Stomach (tissue), 19 donors: ENCODE measurements at regions of chr18 and their contacts with region 1.

Region 1: GRCh38 chr18:46264235-46264893 is 160.2 kb downstream of the HAUS1 start:
- DNase-seq: no peak
- H3K4me3 ChIP-seq: no peak overlapping the region
- H3K27ac ChIP-seq: no peak overlapping the region
- H3K4me1 ChIP-seq: peaks cover 0 to 33% (median 16%) of the 10 kb centered on the region in 4 donors
- H3K27me3 ChIP-seq: no peaks in the 10 kb centered on the region
- CTCF ChIP-seq: no peak
- EP300 ChIP-seq: no peak
- POLR2A ChIP-seq: no peak

Region 2: DNA sequence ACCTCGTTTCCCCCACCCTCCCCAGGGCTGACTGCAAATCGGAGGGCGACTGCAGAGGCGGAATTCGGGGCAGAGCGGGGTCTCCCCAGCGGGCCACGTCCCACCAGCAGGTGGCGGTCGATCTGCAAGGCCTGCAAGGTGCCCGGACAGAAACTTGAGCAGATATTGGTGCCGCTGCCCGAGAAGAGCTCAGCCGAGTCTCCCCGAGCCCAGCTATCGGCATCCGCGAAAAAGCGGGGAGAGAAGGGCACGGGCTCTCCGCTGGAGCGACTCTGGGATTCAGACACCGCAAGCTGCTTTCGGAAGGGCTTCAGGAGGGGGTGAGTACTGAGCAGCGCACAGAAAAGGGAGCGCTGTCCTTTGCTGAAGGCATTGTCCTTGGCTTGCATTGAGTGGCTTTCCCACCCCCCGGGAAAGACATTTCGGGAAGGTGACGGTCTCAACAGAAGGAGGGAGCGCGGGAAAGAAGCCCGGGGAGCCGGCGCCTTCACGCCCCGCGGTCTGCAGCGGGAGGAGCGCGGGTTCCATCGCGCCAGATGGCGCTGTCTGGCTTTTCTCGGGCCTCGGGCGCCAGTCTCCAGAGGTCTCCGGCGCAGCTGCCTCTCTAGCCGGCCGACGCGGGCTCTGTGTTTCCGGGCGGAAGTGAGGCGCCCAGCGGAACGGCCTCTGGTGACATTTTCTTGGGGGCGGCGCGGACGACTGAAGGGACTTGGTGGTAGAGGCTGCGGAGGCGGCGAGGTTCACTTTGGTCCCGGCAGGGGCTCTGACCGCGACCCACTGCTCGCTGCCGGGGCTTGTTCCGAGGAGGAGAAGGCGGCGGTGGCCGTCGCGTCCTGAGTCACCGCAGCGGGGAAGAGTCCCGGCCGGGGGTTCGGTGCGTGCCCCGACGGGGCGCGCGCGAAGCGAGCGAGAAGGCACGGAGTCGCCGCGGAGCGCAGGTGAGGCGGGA is 90.7 kb before region 1 on chr18:
- intact Hi-C with region 1: loop called (anchors 10 kb)
- DNase-seq: peak; percentile 93 to 98
- H3K4me3 ChIP-seq: peak overlapping the region; percentile 86 to 100 (median 92)
- H3K27ac ChIP-seq: peak overlapping the region; percentile 92 to 97 (median 93)
- H3K4me1 ChIP-seq: peaks cover 15 to 47% (median 38%) of the 10 kb centered on the region in 4 donors
- H3K27me3 ChIP-seq: no peaks in the 10 kb centered on the region
- CTCF ChIP-seq: peak in 5 of 7 experiments; percentile 65 to 85 (median 78)
- EP300 ChIP-seq: no peak
- POLR2A ChIP-seq: peak in 1 of 4 donors; percentile 28

Region 3: GRCh38 chr18:46809145-46809544 is 544.8 kb after region 1 on chr18:
- intact Hi-C with region 1: no loop called
- DNase-seq: no peak
- H3K4me3 ChIP-seq: no peak overlapping the region
- H3K27ac ChIP-seq: no peak overlapping the region
- H3K4me1 ChIP-seq: peaks cover 0 to 4% (median 0%) of the 10 kb centered on the region in 4 donors
- H3K27me3 ChIP-seq: no peaks in the 10 kb centered on the region
- CTCF ChIP-seq: no peak
- EP300 ChIP-seq: no peak
- POLR2A ChIP-seq: no peak